B cell (primary cell): ENCODE measurements at regions of chr6 and their contacts with region 1.

Region 1: GRCh38 chr6:129598244-129599187 is 111.5 kb downstream of the ARHGAP18 start:
- DNase-seq: peak; percentile 81
- ATAC-seq: peak; percentile 76
- H3K4me3 ChIP-seq: no peak overlapping the region
- H3K4me3 Mint-ChIP-seq: no peak overlapping the region
- H3K27ac ChIP-seq: no peak overlapping the region
- H3K27ac Mint-ChIP-seq: no peak overlapping the region
- H3K4me1 ChIP-seq: peaks cover 5 to 9% of the 10 kb centered on the region in 2 donors
- H3K4me1 Mint-ChIP-seq: peaks cover 8% of the 10 kb centered on the region
- H3K27me3 ChIP-seq: no peaks in the 10 kb centered on the region
- H3K27me3 Mint-ChIP-seq: no peaks in the 10 kb centered on the region
- CTCF ChIP-seq: peak; percentile 91

Region 2: DNA sequence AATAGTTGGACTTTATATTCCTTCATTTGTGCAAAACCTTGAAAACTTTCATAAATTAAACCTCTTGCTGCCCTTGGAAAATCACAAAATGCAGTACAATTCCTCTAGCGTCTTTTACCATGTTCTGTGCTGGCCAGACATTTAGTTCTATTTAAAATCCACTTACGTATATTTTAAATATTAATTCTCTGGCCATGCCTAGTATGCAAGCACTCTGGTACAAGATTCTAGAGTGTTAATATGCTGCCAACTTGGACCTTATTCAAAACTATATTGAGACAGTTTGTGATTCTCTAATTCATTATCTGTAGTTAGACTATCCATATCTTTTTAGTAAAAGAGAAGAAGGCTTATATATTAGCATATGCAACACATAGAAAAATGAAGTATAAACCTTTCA is 216.6 kb before region 1 on chr6:
- CTCF ChIA-PET with region 1: no interaction called
- POLR2A ChIA-PET with region 1: no interaction called
- intact Hi-C with region 1: no loop called
- DNase-seq: no peak
- ATAC-seq: no peak
- H3K4me3 ChIP-seq: no peak overlapping the region
- H3K4me3 Mint-ChIP-seq: no peak overlapping the region
- H3K27ac ChIP-seq: no peak overlapping the region
- H3K27ac Mint-ChIP-seq: no peak overlapping the region
- H3K4me1 ChIP-seq: no peaks in the 10 kb centered on the region
- H3K4me1 Mint-ChIP-seq: no peaks in the 10 kb centered on the region
- H3K27me3 ChIP-seq: peaks cover 0 to 3% (median 0%) of the 10 kb centered on the region in 4 experiments
- H3K27me3 Mint-ChIP-seq: peaks cover 25% of the 10 kb centered on the region
- CTCF ChIP-seq: no peak

Region 3: GRCh38 chr6:129672881-129673643 is 74.5 kb after region 1 on chr6:
- CTCF ChIA-PET with region 1: interaction called, 17 read pairs
- POLR2A ChIA-PET with region 1: no interaction called
- intact Hi-C with region 1: no loop called
- DNase-seq: no peak
- ATAC-seq: peak; percentile 32
- H3K4me3 ChIP-seq: no peak overlapping the region
- H3K4me3 Mint-ChIP-seq: peak overlapping the region; percentile 17
- H3K27ac ChIP-seq: peak overlapping the region in 1 of 2 donors; percentile 43
- H3K27ac Mint-ChIP-seq: peak overlapping the region; percentile 70
- H3K4me1 ChIP-seq: peaks cover 12 to 14% of the 10 kb centered on the region in 2 donors
- H3K4me1 Mint-ChIP-seq: peaks cover 21% of the 10 kb centered on the region
- H3K27me3 ChIP-seq: no peaks in the 10 kb centered on the region
- H3K27me3 Mint-ChIP-seq: no peaks in the 10 kb centered on the region
- CTCF ChIP-seq: no peak

Region 4: GRCh38 chr6:129736105-129736504 is 137.6 kb after region 1 on chr6:
- CTCF ChIA-PET with region 1: interaction called, 349 read pairs
- POLR2A ChIA-PET with region 1: no interaction called
- intact Hi-C with region 1: no loop called
- DNase-seq: no peak
- ATAC-seq: no peak
- H3K4me3 ChIP-seq: no peak overlapping the region
- H3K4me3 Mint-ChIP-seq: no peak overlapping the region
- H3K27ac ChIP-seq: no peak overlapping the region
- H3K27ac Mint-ChIP-seq: no peak overlapping the region
- H3K4me1 ChIP-seq: no peaks in the 10 kb centered on the region
- H3K4me1 Mint-ChIP-seq: no peaks in the 10 kb centered on the region
- H3K27me3 ChIP-seq: no peaks in the 10 kb centered on the region
- H3K27me3 Mint-ChIP-seq: no peaks in the 10 kb centered on the region
- CTCF ChIP-seq: no peak

Region 5: DNA sequence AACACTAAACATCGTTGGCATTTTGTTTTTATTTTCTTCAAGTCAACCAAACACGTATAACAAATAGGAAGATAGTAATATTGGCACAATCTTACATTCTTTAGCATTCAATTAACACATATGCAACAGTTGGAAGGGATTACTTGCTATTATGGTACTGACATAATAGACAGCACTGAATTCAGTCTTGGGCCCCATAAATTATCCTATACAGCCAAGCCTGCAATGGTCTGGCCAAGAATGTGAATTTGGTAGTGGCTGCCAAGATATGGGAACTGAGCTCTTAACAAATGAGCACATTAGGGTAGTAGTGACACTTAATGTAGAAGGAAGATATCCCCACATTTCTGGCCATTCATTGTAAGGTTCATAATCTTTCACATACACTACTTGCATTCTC is 156.2 kb after region 1 on chr6:
- CTCF ChIA-PET with region 1: interaction called, 12 read pairs
- POLR2A ChIA-PET with region 1: no interaction called
- intact Hi-C with region 1: no loop called
- DNase-seq: no peak
- ATAC-seq: no peak
- H3K4me3 ChIP-seq: no peak overlapping the region
- H3K4me3 Mint-ChIP-seq: no peak overlapping the region
- H3K27ac ChIP-seq: no peak overlapping the region
- H3K27ac Mint-ChIP-seq: no peak overlapping the region
- H3K4me1 ChIP-seq: peaks cover 12 to 16% of the 10 kb centered on the region in 2 donors
- H3K4me1 Mint-ChIP-seq: peaks cover 21% of the 10 kb centered on the region
- H3K27me3 ChIP-seq: no peaks in the 10 kb centered on the region
- H3K27me3 Mint-ChIP-seq: peaks cover 3% of the 10 kb centered on the region
- CTCF ChIP-seq: no peak

Region 6: GRCh38 chr6:129936329-129937165 is 338.0 kb after region 1 on chr6:
- CTCF ChIA-PET with region 1: interaction called, 12 read pairs
- POLR2A ChIA-PET with region 1: no interaction called
- intact Hi-C with region 1: loop called (anchors 1 kb)
- DNase-seq: peak; percentile 66
- ATAC-seq: no peak
- H3K4me3 ChIP-seq: no peak overlapping the region
- H3K4me3 Mint-ChIP-seq: peak overlapping the region; percentile 62
- H3K27ac ChIP-seq: no peak overlapping the region
- H3K27ac Mint-ChIP-seq: no peak overlapping the region
- H3K4me1 ChIP-seq: peaks cover 0 to 3% of the 10 kb centered on the region in 2 donors
- H3K4me1 Mint-ChIP-seq: peaks cover 3% of the 10 kb centered on the region
- H3K27me3 ChIP-seq: peaks cover 0 to 7% (median 3%) of the 10 kb centered on the region in 4 experiments
- H3K27me3 Mint-ChIP-seq: peaks cover 19% of the 10 kb centered on the region
- CTCF ChIP-seq: peak; percentile 86

Region 7: GRCh38 chr6:130872250-130873095 is 1274.0 kb after region 1 on chr6:
- CTCF ChIA-PET with region 1: no interaction called
- POLR2A ChIA-PET with region 1: no interaction called
- intact Hi-C with region 1: loop called (anchors 10 kb)
- DNase-seq: peak; percentile 72
- ATAC-seq: peak; percentile 43
- H3K4me3 ChIP-seq: no peak overlapping the region
- H3K4me3 Mint-ChIP-seq: no peak overlapping the region
- H3K27ac ChIP-seq: no peak overlapping the region
- H3K27ac Mint-ChIP-seq: no peak overlapping the region
- H3K4me1 ChIP-seq: no peaks in the 10 kb centered on the region
- H3K4me1 Mint-ChIP-seq: no peaks in the 10 kb centered on the region
- H3K27me3 ChIP-seq: no peaks in the 10 kb centered on the region
- H3K27me3 Mint-ChIP-seq: no peaks in the 10 kb centered on the region
- CTCF ChIP-seq: peak; percentile 98